Endothelial cell of umbilical vein (primary cell): ENCODE measurements at regions of chr6 and their contacts with region 1.

Region 1: GRCh38 chr6:122471107-122472021 is at the start of gene SERINC1:
- DNase-seq: peak; percentile 97
- H3K4me3 ChIP-seq: peak within 1 kb of the TSS; percentile 83 to 98 (median 97)
- H3K27ac ChIP-seq: peak within 1 kb of the TSS; percentile 91
- H3K4me1 ChIP-seq: peaks cover 8% of the 10 kb centered on the region
- H3K27me3 ChIP-seq: no peaks in the 10 kb centered on the region
- CTCF ChIP-seq: no peak
- POLR2A ChIP-seq: peak; percentile 82
- total RNA-seq, gene SERINC1: 76.5 and 82.0 TPM in 2 replicates

Region 2: DNA sequence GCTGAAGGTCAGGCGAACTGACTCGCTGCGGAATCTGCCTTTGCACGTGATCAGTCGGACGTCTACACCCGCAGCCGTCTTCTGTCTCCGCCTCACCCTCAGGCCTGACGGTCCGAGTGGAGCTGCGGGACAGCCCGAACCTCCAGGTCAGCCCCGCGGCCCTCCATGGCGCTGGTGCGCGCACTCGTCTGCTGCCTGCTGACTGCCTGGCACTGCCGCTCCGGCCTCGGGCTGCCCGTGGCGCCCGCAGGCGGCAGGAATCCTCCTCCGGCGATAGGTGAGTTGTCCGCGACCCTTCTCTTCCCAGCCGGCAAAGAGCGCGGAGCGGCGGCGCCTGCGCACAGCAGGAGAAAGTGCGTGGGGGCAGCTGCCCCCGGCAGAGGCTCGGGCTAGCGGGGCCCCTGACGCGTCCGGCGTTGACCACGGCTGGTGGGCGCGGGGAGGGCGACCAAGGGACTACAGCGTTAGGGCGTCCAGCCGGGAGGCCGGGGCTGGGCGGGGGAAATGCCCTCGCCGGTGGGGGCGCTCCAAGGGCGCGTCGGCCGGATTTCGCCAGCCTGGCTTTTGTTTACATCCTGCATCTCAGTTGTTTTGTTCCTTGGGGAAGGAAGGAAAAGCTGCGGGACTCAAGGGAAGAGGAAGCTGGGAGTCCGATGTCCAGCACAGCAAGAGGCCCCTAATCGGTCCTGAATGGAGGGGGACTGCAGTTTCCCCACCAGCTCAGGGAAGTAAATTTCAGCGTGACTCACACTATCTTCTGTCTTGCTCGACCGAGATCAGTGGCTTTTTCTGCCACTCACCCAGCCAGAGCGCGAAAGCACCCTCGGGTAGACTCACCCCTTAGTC is 318.0 kb after region 1 on chr6 and contains the start of gene SMPDL3A:
- CTCF ChIA-PET with region 1: no interaction called
- POLR2A ChIA-PET with region 1: no interaction called
- dilution Hi-C with region 1: no loop called
- intact Hi-C with region 1: loop called (anchors 5 kb)
- DNase-seq: peak; percentile 77
- H3K4me3 ChIP-seq: peak within 1 kb of the TSS; percentile 53 to 91 (median 58)
- H3K27ac ChIP-seq: peak within 1 kb of the TSS; percentile 31
- H3K4me1 ChIP-seq: peaks cover 6% of the 10 kb centered on the region
- H3K27me3 ChIP-seq: peaks cover 9 to 21% of the 10 kb centered on the region in 2 experiments
- CTCF ChIP-seq: peak; percentile 35 to 55
- POLR2A ChIP-seq: peak; percentile 9
- total RNA-seq, gene SMPDL3A: 4.1 TPM in 2 replicates